ENCODE measurements at regions of chr16 and their contacts with region 1.

Region 1: DNA sequence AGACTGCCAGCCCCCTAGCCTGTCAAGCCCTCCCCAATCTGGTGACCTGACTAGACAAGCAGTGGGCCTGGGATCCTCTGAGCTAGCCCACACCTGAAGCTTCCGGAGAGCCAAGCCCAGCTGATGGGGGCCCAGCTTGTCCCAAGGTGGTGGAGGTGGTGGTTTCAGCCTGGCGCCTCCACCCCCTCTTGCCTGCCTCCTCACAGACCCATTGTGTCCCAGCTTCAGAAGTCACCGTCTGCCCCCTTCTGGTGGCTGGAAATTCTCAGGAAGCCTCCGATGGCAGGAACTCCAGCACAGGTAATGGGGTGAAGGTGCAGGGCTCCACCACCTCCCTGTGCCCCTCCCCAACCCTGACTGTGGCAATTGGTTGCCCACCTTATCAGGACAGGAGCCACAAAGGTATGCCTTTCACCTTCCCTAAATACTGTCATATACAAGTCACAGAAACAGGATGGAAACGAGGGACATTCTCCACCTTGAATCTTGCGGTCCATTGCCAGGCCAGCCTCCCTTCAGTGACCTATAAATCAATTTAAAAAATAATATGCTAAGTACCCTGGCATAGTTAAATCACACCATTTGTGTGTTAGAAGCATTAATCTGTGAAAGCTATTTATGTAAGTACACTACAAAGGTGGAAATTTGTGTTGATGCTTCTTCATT is 66.0 kb upstream of the ZNF423 start:
- DNase-seq: peak; percentile 64 to 65
- H3K4me3 ChIP-seq: no peak overlapping the region
- H3K27ac ChIP-seq: no peak overlapping the region
- H3K4me1 ChIP-seq: no peaks in the 10 kb centered on the region
- H3K27me3 ChIP-seq: no peaks in the 10 kb centered on the region
- CTCF ChIP-seq: peak; percentile 12 to 67 (median 44)
- POLR2A ChIP-seq: no peak

Region 2: GRCh38 chr16:49407873-49408550 is 513.9 kb before region 1 on chr16:
- intact Hi-C with region 1: loop called (anchors 10 kb)
- DNase-seq: peak; percentile 88 to 93
- H3K4me3 ChIP-seq: no peak overlapping the region
- H3K27ac ChIP-seq: no peak overlapping the region
- H3K4me1 ChIP-seq: no peaks in the 10 kb centered on the region
- H3K27me3 ChIP-seq: no peaks in the 10 kb centered on the region
- CTCF ChIP-seq: peak; percentile 58 to 96 (median 88)
- POLR2A ChIP-seq: no peak

Region 3: GRCh38 chr16:49876716-49877129 is 45.2 kb before region 1 on chr16:
- intact Hi-C with region 1: no loop called
- DNase-seq: peak; percentile 63 to 69
- H3K4me3 ChIP-seq: peak overlapping the region in 1 of 3 donors; percentile 16
- H3K27ac ChIP-seq: no peak overlapping the region
- H3K4me1 ChIP-seq: peaks cover 5 to 9% of the 10 kb centered on the region in 2 donors
- H3K27me3 ChIP-seq: no peaks in the 10 kb centered on the region
- CTCF ChIP-seq: peak; percentile 40 to 95 (median 74)
- POLR2A ChIP-seq: no peak

Region 4: DNA sequence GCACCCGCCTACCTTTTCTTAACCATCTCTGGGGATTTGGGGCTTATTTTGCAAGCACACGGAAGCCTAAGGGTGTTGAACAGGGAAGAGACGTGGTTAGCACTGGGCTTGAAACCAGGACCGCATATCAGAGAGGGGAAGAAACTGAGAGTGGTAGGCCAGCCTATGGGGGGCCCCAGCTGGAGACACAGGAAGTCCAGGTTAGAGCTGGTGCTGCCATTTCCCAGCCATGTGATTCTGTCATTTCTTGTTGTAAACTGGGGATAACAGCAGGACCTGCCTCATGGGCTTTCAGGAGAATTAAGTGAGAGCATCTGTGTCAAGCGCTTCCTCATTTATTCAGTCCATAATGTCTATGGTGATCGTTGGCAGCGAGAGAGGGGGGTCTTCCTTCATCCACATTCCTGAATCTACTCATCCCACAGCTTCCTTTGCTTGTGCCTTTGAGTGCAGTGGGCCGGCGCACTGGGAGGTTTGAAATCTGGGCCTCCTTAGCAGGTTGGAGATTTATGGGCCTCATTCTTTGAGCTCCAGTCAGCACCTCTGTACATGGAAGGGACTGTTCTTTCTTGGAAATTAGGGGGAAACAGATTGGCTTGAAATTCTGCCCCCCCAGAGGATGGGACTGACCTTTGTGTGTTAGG is 646.4 kb after region 1 on chr16:
- intact Hi-C with region 1: no loop called
- DNase-seq: no peak
- H3K4me3 ChIP-seq: no peak overlapping the region
- H3K27ac ChIP-seq: no peak overlapping the region
- H3K4me1 ChIP-seq: no peaks in the 10 kb centered on the region
- H3K27me3 ChIP-seq: no peaks in the 10 kb centered on the region
- CTCF ChIP-seq: no peak
- POLR2A ChIP-seq: no peak

Measured in thyroid gland (tissue), 4 donors.